ENCODE measurements at regions of chr7 and their contacts with region 1.

Region 1: DNA sequence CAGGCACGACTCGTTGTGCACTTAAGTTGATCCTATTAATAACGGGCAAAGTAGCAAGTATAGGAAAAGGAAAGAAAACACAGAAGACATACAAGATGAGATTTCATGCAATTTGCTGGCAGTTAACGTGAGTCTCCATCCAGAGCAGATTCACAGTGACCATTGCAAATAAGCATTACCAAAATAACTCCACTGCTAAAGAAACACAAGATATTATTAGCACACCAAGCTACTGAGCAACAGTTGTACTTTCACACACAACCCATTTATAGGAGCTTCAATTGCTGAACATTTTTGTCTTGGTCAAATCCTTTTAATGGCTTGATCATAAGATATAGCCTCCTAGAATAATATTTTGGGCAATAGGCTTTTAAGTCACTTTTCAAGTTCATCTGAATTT is 187.7 kb upstream of the HGF start:
- DNase-seq: no peak

Region 2: GRCh38 chr7:81761821-81762220 is 195.7 kb before region 1 on chr7:
- intact Hi-C with region 1: no loop called
- DNase-seq: no peak

Region 3: DNA sequence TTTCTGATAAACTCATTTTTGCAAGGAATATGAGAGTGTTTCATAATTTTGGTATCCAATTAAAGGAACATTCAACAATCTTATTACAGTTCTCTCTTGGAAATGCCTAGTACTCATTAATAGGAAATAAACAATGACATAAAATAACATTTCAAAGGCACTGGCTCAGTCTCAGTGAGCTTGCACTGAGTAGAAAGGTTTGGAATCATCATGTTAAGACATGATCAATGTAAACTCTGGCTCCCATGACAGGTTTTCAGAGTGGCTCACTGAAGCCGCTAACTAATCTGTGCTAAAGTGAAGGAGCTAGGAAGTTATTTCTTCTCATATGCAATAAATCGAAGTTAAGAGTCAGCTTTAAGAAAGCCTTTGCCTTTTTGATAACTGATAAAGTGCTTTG is 15.6 kb after region 1 on chr7:
- intact Hi-C with region 1: loop called in 1 of 2 experiments (anchors 1 kb)
- DNase-seq: no peak

Region 4: DNA sequence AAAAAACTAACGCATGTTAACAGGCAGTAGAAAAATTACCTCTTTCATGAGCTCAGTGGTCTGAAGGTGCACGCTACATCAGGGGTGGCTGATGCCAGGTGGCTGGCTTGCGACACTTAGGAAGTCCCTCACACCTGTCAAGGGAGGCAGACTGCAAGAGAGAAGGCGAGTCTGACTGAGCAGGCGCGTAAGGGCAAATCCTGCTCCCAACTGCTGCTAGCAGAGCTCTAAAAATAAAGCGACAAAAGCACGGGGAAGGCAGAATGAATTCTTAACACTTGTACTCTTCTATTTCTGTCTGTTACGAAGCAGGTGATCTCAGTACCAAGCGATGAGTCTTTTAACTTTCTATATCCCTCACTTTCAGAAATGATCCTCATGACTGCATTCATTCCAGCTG is 452.9 kb after region 1 on chr7:
- intact Hi-C with region 1: no loop called
- DNase-seq: no peak

Region 5: DNA sequence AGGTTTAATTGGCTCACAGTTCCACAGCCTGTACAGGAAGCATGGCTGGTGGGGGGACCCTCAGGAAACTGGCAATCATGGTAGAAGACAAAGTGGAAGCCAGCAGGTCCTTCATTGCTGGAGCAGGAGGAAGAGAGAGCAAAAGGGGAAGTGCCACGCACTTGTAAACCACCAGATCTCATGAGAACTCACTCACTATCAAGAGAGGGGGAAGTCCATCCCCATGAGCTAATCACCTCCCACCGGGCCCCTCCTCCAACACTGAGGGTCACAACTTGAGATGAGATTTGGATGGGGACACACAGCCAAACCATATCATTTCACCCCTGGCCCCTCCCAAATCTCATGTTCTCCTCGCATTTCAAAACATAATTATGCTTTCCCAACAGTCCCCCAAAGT is 658.0 kb after region 1 on chr7:
- intact Hi-C with region 1: no loop called
- DNase-seq: no peak

Measured in posterior vena cava (tissue), 2 donors.